ENCODE measurements at regions of chr7 and their contacts with region 1.

Region 1: GRCh38 chr7:124856299-124856888 is 73.2 kb downstream of the POT1 start:
- DNase-seq: peak; percentile 26 to 52 (median 35)
- ATAC-seq: peak; percentile 87
- H3K4me3 ChIP-seq: no peak overlapping the region
- H3K27ac ChIP-seq: no peak overlapping the region
- H3K4me1 ChIP-seq: no peaks in the 10 kb centered on the region
- H3K27me3 ChIP-seq: no peaks in the 10 kb centered on the region
- CTCF ChIP-seq: peak; percentile 42 to 81 (median 61); a peak in 5 of 6 replicates
- EP300 ChIP-seq: no peak
- POLR2A ChIP-seq: no peak
- RAD21 ChIP-seq: peak; percentile 69 to 74

Region 2: DNA sequence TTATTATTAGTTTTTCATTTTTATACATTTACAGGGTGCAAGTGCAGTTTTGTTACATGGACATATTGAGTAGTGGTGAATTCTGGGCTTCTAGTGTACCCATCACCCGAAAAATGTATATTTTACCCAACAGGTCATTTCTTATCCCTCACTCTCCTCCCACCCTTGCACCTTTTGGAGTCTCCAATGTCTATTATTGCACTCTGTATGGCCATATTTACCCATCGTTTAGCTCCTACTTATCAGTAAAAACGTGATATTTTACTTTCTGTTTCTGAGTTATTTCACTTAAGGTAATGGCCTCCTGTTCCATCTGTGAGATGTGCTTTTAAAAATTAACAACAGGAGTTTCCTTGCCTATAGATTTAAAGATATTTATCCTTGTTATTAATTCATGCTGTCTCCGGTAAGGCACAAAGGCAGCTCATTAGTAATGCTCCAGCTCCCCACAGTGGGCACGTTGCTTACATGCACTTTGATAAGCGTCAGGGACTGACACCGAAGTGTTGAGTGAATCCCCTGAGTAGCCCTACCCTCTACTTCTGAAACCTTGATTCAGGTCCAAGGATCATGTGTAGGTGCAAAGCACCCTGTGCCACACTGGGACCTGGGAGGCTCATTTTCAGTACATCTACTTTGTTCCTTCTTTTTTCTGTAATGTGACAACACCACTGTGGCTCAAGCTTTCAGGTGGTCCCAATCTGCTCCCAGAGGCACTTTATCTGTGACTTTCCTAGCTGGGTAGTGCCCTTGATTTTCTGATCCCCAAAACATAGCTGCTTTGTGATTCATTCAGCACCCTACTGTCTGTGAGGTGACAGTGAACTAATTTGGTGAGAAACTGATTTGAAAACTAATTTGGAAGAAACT is 984.2 kb before region 1 on chr7:
- CTCF ChIA-PET with region 1: no interaction called
- POLR2A ChIA-PET with region 1: no interaction called
- in situ Hi-C with region 1: no loop called
- intact Hi-C with region 1: loop called (anchors 10 kb)
- DNase-seq: peak in 2 of 4 experiments; percentile 45 to 67
- ATAC-seq: peak; percentile 95
- H3K4me3 ChIP-seq: no peak overlapping the region
- H3K27ac ChIP-seq: no peak overlapping the region
- H3K4me1 ChIP-seq: no peaks in the 10 kb centered on the region
- H3K27me3 ChIP-seq: peaks cover 0 to 9% of the 10 kb centered on the region in 2 experiments; a peak in 1 of 5 replicates
- CTCF ChIP-seq: peak; percentile 62 to 82 (median 79)
- EP300 ChIP-seq: no peak
- POLR2A ChIP-seq: no peak
- RAD21 ChIP-seq: peak; percentile 89 to 94

Region 3: GRCh38 chr7:124101173-124101768 is 755.1 kb before region 1 on chr7:
- CTCF ChIA-PET with region 1: no interaction called
- POLR2A ChIA-PET with region 1: no interaction called
- in situ Hi-C with region 1: no loop called
- intact Hi-C with region 1: loop called (anchors 2 kb)
- DNase-seq: peak; percentile 19 to 55 (median 40)
- ATAC-seq: no peak
- H3K4me3 ChIP-seq: no peak overlapping the region
- H3K27ac ChIP-seq: no peak overlapping the region
- H3K4me1 ChIP-seq: no peaks in the 10 kb centered on the region
- H3K27me3 ChIP-seq: no peaks in the 10 kb centered on the region
- CTCF ChIP-seq: peak in 2 of 3 experiments; percentile 42 to 46; a peak in 3 of 6 replicates
- EP300 ChIP-seq: no peak
- POLR2A ChIP-seq: no peak
- RAD21 ChIP-seq: peak; percentile 31 to 44

Region 4: GRCh38 chr7:125814100-125814499 is 957.7 kb after region 1 on chr7:
- CTCF ChIA-PET with region 1: no interaction called
- POLR2A ChIA-PET with region 1: no interaction called
- in situ Hi-C with region 1: no loop called
- intact Hi-C with region 1: no loop called
- DNase-seq: no peak
- ATAC-seq: no peak
- H3K4me3 ChIP-seq: no peak overlapping the region
- H3K27ac ChIP-seq: no peak overlapping the region
- H3K4me1 ChIP-seq: no peaks in the 10 kb centered on the region
- H3K27me3 ChIP-seq: no peaks in the 10 kb centered on the region
- CTCF ChIP-seq: no peak
- EP300 ChIP-seq: no peak
- POLR2A ChIP-seq: no peak
- RAD21 ChIP-seq: no peak

Measured in K562 (cell line).